Endothelial cell of umbilical vein (primary cell): ENCODE measurements at regions of chr2 and their contacts with region 1.

Region 1: DNA sequence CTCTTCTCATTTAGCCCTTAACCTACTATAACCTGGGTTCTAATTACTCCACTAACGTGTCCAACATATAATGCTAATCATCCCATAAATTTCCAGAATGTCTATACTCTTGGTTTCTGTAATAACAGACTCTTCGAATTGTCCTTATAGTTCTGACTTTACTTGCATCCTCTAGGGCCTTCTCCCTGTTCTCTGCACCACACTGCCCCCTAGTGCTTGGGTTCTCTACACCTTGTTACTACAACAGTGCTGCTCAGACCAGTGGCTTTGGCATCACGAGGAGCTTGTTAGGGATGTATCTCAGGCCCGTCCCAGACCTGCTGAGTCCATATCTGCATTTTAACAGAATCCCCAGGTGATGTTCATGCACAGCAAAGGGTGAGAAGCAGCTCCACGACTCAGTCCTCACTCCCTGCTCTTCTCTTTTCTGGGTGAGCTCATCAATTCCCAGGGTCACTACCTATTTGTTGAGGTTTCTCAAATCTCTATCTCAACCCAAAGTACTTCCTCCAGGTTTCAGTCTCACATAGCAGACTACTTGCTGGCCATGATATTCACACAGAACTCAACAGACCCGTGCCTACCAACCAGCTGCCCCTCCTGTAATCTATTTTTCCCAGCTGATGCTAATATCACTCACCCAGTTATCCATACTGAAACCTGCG is 14.5 kb upstream of the DDX1 start:
- DNase-seq: peak; percentile 88
- H3K4me3 ChIP-seq: no peak overlapping the region
- H3K27ac ChIP-seq: no peak overlapping the region
- H3K4me1 ChIP-seq: peaks cover 21% of the 10 kb centered on the region
- H3K27me3 ChIP-seq: no peaks in the 10 kb centered on the region
- CTCF ChIP-seq: peak; percentile 76 to 82
- POLR2A ChIP-seq: no peak

Region 2: DNA sequence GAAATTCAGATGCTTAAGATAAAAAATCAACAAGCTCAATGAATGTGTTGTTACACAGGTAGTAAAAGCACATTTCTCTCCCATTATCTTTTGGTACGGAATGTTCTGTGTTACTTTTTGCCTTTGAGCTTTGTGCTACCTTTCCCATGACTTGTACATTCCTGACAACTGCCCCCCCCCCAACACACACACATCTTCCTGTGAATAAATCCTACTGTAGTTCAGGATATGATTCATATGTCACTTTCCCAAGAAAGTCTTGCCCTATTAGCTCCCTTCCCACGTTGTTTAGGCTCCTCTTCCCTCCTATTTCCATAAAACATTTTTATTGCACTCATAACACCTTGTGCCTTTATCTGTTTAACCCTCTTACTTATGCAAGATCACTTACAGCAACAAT is 1387.3 kb before region 1 on chr2:
- CTCF ChIA-PET with region 1: no interaction called
- POLR2A ChIA-PET with region 1: no interaction called
- dilution Hi-C with region 1: no loop called
- intact Hi-C with region 1: loop called (anchors 10 kb)
- DNase-seq: no peak
- H3K4me3 ChIP-seq: no peak overlapping the region
- H3K27ac ChIP-seq: no peak overlapping the region
- H3K4me1 ChIP-seq: no peaks in the 10 kb centered on the region
- H3K27me3 ChIP-seq: no peaks in the 10 kb centered on the region
- CTCF ChIP-seq: no peak
- POLR2A ChIP-seq: no peak

Region 3: GRCh38 chr2:15159751-15160177 is 417.4 kb before region 1 on chr2:
- CTCF ChIA-PET with region 1: interaction called, 11 read pairs
- POLR2A ChIA-PET with region 1: no interaction called
- dilution Hi-C with region 1: no loop called
- intact Hi-C with region 1: no loop called
- DNase-seq: peak; percentile 55
- H3K4me3 ChIP-seq: no peak overlapping the region
- H3K27ac ChIP-seq: no peak overlapping the region
- H3K4me1 ChIP-seq: no peaks in the 10 kb centered on the region
- H3K27me3 ChIP-seq: no peaks in the 10 kb centered on the region
- CTCF ChIP-seq: peak; percentile 34 to 63
- POLR2A ChIP-seq: no peak

Region 4: GRCh38 chr2:15223887-15224286 is 353.3 kb before region 1 on chr2:
- CTCF ChIA-PET with region 1: interaction called, 4 read pairs
- POLR2A ChIA-PET with region 1: no interaction called
- dilution Hi-C with region 1: no loop called
- intact Hi-C with region 1: loop called (anchors 5 kb)
- DNase-seq: peak; percentile 91
- H3K4me3 ChIP-seq: no peak overlapping the region
- H3K27ac ChIP-seq: peak overlapping the region; percentile 91
- H3K4me1 ChIP-seq: peaks cover 17% of the 10 kb centered on the region
- H3K27me3 ChIP-seq: no peaks in the 10 kb centered on the region
- CTCF ChIP-seq: no peak
- POLR2A ChIP-seq: no peak

Region 5: GRCh38 chr2:15432642-15433256 is 144.5 kb before region 1 on chr2:
- CTCF ChIA-PET with region 1: interaction called, 20 read pairs
- POLR2A ChIA-PET with region 1: no interaction called
- dilution Hi-C with region 1: no loop called
- intact Hi-C with region 1: loop called (anchors 5 kb)
- DNase-seq: no peak
- H3K4me3 ChIP-seq: no peak overlapping the region
- H3K27ac ChIP-seq: no peak overlapping the region
- H3K4me1 ChIP-seq: no peaks in the 10 kb centered on the region
- H3K27me3 ChIP-seq: no peaks in the 10 kb centered on the region
- CTCF ChIP-seq: no peak
- POLR2A ChIP-seq: no peak

Region 6: DNA sequence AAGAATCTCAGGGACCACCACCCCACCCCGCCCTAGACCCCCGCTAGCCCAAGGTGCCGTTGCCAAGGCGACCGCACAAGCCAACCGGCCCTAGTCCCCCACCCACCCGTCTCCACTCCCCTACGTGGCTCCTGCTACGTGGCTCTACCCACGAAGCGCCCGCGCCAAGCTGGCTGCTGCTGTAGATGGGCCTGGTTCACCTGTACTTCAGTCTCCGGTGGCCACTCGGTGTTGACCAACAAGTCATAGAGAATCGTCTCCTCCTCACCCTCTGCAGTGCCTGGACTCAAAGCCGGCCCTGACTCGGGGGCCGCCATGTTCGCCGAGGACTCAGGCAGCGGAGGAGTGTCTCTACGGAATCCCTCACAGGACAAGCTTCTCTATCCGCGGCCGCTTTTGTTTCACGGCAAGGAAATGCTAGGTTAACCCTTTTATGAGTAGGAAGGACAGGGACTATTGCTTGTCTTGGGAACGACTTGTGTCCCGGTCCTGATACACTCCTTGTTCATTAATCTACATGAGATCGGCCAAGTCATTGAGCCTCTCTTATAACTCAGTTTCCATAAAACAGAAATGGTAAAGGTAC is 16.1 kb before region 1 on chr2 and contains the start of gene NBAS:
- CTCF ChIA-PET with region 1: interaction called, 87 read pairs
- POLR2A ChIA-PET with region 1: interaction called, 4 read pairs
- dilution Hi-C with region 1: no loop called
- intact Hi-C with region 1: loop called (anchors 1 kb)
- DNase-seq: peak; percentile 89
- H3K4me3 ChIP-seq: peak within 1 kb of the TSS; percentile 86 to 100 (median 93)
- H3K27ac ChIP-seq: peak within 1 kb of the TSS; percentile 73
- H3K4me1 ChIP-seq: peaks cover 19% of the 10 kb centered on the region
- H3K27me3 ChIP-seq: no peaks in the 10 kb centered on the region
- CTCF ChIP-seq: no peak
- POLR2A ChIP-seq: peak; percentile 76
- total RNA-seq, gene NBAS: 41.2 and 43.0 TPM in 2 replicates